ENCODE measurements at regions of chr4 and their contacts with region 1.

Region 1: DNA sequence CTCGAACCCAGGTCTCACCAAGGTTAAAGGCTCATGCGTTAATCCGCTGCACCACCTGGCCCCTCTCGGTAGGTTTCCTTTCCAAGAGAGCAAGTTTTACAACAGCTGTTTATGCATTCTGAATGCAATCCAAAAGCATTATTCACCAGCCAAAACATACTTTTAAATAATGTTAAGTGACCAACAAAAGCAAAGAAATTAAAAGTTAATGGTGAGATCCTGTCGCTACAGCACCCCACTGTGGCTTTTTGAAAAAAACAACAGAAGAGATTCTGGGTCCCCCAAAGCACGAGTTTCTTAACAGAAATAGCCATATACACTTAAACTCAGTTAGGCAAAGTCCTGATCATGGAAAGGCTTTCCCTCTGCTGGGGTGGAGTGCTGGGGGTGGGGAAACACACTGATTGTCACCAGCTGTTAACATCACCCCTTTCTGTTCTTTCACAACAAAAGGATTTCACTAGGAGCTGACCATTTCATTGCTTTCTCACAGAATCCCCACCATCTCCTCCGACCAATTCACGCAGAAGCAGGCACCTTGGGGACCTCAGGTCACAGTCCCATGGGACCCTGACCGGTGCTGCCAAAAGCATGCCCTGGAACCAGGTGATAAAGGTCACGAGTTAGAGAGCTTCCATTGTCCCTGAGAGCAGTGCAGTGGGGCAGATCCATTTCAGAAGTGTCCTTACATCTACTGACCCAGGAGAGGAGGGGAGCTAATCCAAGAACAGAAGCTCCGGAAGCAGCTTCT is 51.2 kb downstream of the ZNF827 start:
- DNase-seq: no peak

Region 2: GRCh38 chr4:145936142-145936996 is 49.0 kb after region 1 on chr4:
- intact Hi-C with region 1: loop called (anchors 5 kb)
- DNase-seq: peak; percentile 82

Region 3: DNA sequence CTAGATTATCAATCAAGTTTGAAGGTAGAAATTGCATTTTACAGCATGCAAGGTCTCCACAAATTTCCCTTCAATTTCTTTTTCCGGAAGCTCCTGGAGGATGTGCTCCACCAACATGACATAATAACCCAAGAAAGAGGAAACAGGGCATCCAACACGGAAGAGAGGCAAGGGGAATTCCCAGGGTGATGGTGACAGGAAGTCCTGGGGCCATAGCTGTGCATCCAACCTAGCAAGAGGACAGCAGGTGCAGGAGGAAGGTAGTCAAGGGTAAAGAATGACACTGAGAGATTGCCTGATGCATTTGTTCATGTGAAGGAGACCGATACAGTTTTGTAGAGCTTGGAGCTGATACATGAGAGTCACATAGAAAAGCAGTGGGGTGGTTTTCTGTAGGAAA is 172.4 kb after region 1 on chr4:
- intact Hi-C with region 1: no loop called
- DNase-seq: no peak

Measured in cardiac septum (tissue), 1 donor.